MCF 10A (cell line): ENCODE measurements at regions of chr17 and their contacts with region 1.

Region 1: DNA sequence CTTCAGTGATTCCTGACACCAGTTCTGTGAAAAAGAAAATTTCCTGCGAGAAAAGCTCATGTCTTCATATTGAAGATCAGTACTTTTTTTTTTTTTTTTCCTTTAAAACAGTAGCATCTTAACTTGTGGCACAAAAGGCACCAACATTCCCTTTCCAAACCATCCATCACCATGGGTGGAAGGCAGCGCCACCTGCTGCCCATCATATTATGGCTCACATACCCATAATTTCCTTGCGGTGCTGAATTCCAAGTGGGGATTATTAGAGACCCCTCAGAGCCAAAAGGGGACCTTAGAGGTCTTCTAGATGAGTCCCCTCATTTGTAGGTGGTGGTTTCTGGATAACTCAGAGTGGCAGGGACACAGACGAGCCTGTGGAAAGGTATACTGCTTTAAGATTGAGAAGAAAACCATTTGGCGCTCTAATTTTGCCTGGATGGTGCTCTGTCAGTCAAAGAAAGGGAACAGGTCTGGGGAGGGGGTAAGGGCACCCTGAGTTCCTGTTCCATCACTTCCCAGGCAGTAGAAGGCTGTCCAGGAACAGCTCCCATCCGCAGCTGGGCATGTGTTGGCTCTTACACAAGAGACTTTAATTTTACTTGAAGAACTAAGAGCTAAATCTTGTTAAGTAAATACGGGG is 7.9 kb upstream of the SOST start:
- DNase-seq: peak; percentile 69
- H3K4me3 Mint-ChIP-seq: no peak overlapping the region
- H3K27ac Mint-ChIP-seq: no peak overlapping the region
- H3K4me1 Mint-ChIP-seq: no peaks in the 10 kb centered on the region
- H3K27me3 Mint-ChIP-seq: no peaks in the 10 kb centered on the region
- CTCF ChIP-seq: peak; percentile 60

Region 2: GRCh38 chr17:43680461-43680860 is 86.1 kb before region 1 on chr17:
- CTCF ChIA-PET with region 1: interaction called, 12 read pairs
- POLR2A ChIA-PET with region 1: no interaction called
- intact Hi-C with region 1: no loop called
- DNase-seq: no peak
- H3K4me3 Mint-ChIP-seq: no peak overlapping the region
- H3K27ac Mint-ChIP-seq: no peak overlapping the region
- H3K4me1 Mint-ChIP-seq: peaks cover 4% of the 10 kb centered on the region
- H3K27me3 Mint-ChIP-seq: no peaks in the 10 kb centered on the region
- CTCF ChIP-seq: no peak

Region 3: DNA sequence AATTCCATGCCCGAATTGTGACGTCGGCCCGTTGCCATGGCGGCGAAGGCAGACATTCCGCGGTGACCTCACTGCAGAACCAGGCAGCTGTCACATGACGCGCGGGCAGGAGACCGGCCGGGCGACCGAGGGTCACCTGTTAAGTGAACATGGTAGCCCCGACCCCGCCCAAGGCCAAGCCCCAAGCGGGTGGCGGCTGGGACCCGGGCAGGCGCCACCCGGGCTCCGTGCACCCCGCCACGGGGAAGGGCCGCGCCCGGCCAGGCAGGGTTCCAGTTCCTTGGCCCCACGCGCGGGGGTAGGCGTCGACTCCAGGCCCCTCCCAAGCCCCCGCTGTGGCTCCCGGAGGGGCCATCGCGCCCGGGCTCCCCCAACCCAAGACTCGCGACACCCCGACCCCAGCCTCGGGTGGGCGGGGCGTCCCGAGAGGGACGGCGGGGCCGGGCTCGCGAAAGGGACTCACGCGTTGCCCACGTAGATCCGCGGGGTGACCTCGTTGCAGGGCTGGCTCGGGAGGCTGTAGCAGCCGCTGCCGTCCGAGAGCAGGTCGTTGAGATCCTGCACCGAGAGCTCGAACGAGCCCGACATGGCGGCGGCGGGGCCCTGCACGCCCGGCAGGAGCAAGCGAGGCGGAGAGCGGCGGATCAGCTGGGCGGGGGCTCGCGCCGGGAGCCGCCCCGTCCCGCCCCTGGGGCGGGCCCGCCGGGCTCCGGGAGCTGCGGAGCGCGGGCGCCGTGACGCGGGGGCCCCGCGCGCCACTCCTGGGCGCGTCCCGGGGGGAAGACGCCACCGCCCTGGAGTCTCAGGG is 12.0 kb after region 1 on chr17 and contains the start of gene DUSP3:
- CTCF ChIA-PET with region 1: interaction called, 31 read pairs
- POLR2A ChIA-PET with region 1: interaction called, 4 read pairs
- intact Hi-C with region 1: no loop called
- DNase-seq: peak; percentile 78
- H3K4me3 Mint-ChIP-seq: peak within 1 kb of the TSS; percentile 77
- H3K27ac Mint-ChIP-seq: peak within 1 kb of the TSS; percentile 93
- H3K4me1 Mint-ChIP-seq: no peaks in the 10 kb centered on the region
- H3K27me3 Mint-ChIP-seq: no peaks in the 10 kb centered on the region
- CTCF ChIP-seq: no peak
- total RNA-seq, gene DUSP3: 39.7 and 55.0 TPM in 2 replicates